Posterior vena cava (tissue), 2 donors: ENCODE measurements at regions of chr2 and their contacts with region 1.

Region 1: DNA sequence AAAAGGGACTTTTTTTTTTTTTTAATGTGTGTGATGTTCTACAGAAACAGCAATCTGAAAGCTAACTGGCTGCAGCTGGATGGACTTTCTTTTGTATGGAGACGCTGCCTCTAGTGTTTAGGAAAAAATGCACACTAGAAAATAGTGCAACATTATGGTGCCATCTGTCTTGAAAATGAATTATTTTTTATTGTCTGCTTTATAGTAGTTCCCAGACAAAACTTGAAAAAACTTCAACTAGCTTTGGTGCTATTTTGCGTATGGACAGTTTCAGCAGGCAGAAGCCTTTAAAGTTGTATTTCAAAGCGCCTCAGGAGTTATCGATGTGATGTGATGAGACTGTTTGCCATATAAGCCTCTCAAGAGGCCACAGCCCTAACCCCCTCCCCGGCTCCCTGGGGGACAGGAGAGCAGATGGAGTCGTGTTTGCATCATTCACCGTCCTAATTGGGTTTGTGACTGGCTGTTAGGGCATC is 86.9 kb downstream of the LTBP1 start:
- DNase-seq: no peak

Region 2: DNA sequence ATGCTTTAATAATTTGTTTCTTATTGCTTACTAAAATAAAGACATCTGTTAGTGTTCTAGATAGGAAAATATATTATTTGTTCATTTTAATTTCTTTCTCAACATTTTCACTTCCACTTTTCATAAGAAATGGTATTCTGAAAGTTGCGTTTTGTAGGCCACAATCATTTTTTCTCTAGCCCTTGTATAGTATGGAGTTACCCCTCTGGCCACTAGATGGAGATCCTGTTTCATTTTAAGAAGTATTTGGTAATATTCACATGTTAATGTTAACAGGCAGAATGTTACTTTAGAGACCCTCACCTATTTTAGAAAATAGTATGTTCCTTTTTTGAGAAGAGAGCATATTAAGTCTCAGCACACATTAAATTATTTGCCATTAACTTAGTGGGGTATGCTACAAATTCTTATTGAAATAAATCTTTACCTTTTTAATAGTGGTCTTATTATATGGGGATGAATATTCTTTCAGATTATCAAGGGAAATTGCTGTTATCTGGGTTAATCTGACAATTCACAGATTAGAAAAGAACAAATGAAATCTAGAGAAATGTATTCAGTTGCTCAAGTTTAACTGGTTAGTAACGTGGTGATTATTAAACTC is 479.7 kb before region 1 on chr2:
- intact Hi-C with region 1: loop called in 1 of 2 experiments (anchors 5 kb)
- DNase-seq: no peak

Region 3: GRCh38 chr2:33051586-33052360 is 18.1 kb after region 1 on chr2:
- intact Hi-C with region 1: no loop called
- DNase-seq: no peak

Region 4: GRCh38 chr2:33275689-33276444 is 242.2 kb after region 1 on chr2:
- intact Hi-C with region 1: loop called in 1 of 2 experiments (anchors 5 kb)
- DNase-seq: no peak